ENCODE measurements at regions of chr2 and their contacts with region 1.

Region 1: GRCh38 chr2:225002039-225002655 is 40.1 kb downstream of the DOCK10 start:
- DNase-seq: peak; percentile 65
- H3K4me3 Mint-ChIP-seq: no peak overlapping the region
- H3K27ac Mint-ChIP-seq: peak overlapping the region; percentile 74
- H3K4me1 Mint-ChIP-seq: peaks cover 82% of the 10 kb centered on the region
- H3K27me3 Mint-ChIP-seq: no peaks in the 10 kb centered on the region

Region 2: GRCh38 chr2:224807153-224807964 is 194.8 kb before region 1 on chr2:
- CTCF ChIA-PET with region 1: no interaction called
- POLR2A ChIA-PET with region 1: no interaction called
- intact Hi-C with region 1: loop called (anchors 5 kb)
- DNase-seq: no peak
- H3K4me3 Mint-ChIP-seq: no peak overlapping the region
- H3K27ac Mint-ChIP-seq: peak overlapping the region; percentile 23
- H3K4me1 Mint-ChIP-seq: no peaks in the 10 kb centered on the region
- H3K27me3 Mint-ChIP-seq: no peaks in the 10 kb centered on the region

Region 3: DNA sequence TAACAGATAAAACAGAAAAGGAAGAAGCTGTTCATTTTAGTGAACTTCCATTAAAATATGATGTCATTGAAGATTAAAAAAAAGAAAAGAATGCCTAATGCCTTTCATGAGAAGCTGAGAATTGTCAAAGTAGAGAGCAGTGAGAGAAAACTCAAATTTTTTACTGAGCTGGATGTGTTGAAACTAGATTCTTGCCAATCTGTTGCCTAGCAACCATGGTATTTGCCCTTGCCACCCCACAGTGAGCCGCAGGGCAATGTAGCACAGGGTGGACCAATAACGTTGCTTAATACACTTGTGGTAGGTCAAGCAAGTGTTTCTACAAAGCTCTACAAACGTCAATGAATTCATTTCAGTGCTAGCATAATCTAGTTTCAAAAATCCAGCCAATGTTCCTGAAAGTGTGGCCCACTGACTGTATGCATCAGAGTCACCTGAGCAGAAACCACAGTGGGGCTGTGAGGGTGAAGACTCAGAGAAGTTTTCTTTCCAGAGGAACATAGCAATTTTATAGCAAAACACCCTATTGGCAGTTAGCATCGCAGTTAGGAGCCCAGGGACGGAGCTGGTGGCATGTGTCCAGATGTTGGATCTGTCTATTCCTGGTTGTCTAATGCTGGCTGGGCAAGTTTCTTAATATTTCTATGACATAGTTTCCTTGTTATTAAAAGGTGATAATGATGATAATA is 92.1 kb before region 1 on chr2:
- CTCF ChIA-PET with region 1: interaction called, 13 read pairs
- POLR2A ChIA-PET with region 1: no interaction called
- intact Hi-C with region 1: no loop called
- DNase-seq: peak; percentile 47
- H3K4me3 Mint-ChIP-seq: no peak overlapping the region
- H3K27ac Mint-ChIP-seq: peak overlapping the region; percentile 69
- H3K4me1 Mint-ChIP-seq: peaks cover 47% of the 10 kb centered on the region
- H3K27me3 Mint-ChIP-seq: no peaks in the 10 kb centered on the region

Region 4: GRCh38 chr2:224973112-224974016 is 28.8 kb before region 1 on chr2:
- CTCF ChIA-PET with region 1: interaction called, 15 read pairs
- POLR2A ChIA-PET with region 1: no interaction called
- intact Hi-C with region 1: loop called (anchors 2 kb)
- DNase-seq: peak; percentile 43
- H3K4me3 Mint-ChIP-seq: no peak overlapping the region
- H3K27ac Mint-ChIP-seq: peak overlapping the region; percentile 35
- H3K4me1 Mint-ChIP-seq: peaks cover 76% of the 10 kb centered on the region
- H3K27me3 Mint-ChIP-seq: no peaks in the 10 kb centered on the region

Region 5: GRCh38 chr2:225041851-225042799 is 40.0 kb after region 1 on chr2 and contains the start of gene DOCK10:
- CTCF ChIA-PET with region 1: interaction called, 7 read pairs
- POLR2A ChIA-PET with region 1: interaction called, 4 read pairs
- intact Hi-C with region 1: loop called (anchors 2 kb)
- DNase-seq: peak; percentile 67
- H3K4me3 Mint-ChIP-seq: peak within 1 kb of the TSS; percentile 88
- H3K27ac Mint-ChIP-seq: peak within 1 kb of the TSS; percentile 96
- H3K4me1 Mint-ChIP-seq: peaks cover 44% of the 10 kb centered on the region
- H3K27me3 Mint-ChIP-seq: no peaks in the 10 kb centered on the region
- total RNA-seq, gene DOCK10: 134 to 139 TPM

Region 6: GRCh38 chr2:225398372-225398771 is 396.2 kb after region 1 on chr2:
- CTCF ChIA-PET with region 1: no interaction called
- POLR2A ChIA-PET with region 1: no interaction called
- intact Hi-C with region 1: no loop called
- DNase-seq: no peak
- H3K4me3 Mint-ChIP-seq: no peak overlapping the region
- H3K27ac Mint-ChIP-seq: no peak overlapping the region
- H3K4me1 Mint-ChIP-seq: no peaks in the 10 kb centered on the region
- H3K27me3 Mint-ChIP-seq: peaks cover 16% of the 10 kb centered on the region

Region 7: DNA sequence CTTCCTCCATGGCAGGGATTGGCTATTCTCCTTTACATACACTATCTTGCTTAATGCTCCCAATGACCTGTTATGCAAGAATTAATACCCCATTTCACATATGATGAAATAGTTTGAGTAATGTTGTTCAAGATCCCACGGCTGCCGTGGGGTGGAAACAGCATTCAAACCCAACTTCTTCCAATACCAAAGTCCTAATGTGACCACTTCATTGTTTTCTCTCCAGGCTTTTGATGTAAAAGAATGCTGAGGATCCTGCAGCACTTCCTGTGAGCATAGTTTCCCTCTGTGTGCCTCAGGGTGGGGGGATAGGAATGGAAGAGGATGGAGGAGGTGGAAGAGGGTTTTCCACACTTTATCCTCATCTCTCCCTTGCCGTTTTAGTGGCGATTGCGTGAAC is 1598.0 kb after region 1 on chr2:
- CTCF ChIA-PET with region 1: no interaction called
- POLR2A ChIA-PET with region 1: no interaction called
- intact Hi-C with region 1: no loop called
- DNase-seq: no peak
- H3K4me3 Mint-ChIP-seq: no peak overlapping the region
- H3K27ac Mint-ChIP-seq: no peak overlapping the region
- H3K4me1 Mint-ChIP-seq: no peaks in the 10 kb centered on the region
- H3K27me3 Mint-ChIP-seq: peaks cover 16% of the 10 kb centered on the region